ENCODE measurements at regions of chr2 and their contacts with region 1.

Region 1: GRCh38 chr2:205680067-205680466 is 2.2 kb upstream of the NRP2 start:
- DNase-seq: peak in 4 of 5 donors; percentile 32 to 39 (median 38)
- H3K4me3 ChIP-seq: no peak overlapping the region
- H3K4me3 Mint-ChIP-seq: peak overlapping the region in 4 of 8 donors; percentile 45 to 63 (median 50)
- H3K27ac ChIP-seq: no peak overlapping the region
- H3K27ac Mint-ChIP-seq: no peak overlapping the region
- H3K4me1 ChIP-seq: peaks cover 18% of the 10 kb centered on the region
- H3K4me1 Mint-ChIP-seq: peaks cover 5 to 29% (median 20%) of the 10 kb centered on the region in 4 donors
- H3K27me3 ChIP-seq: peaks cover 22% of the 10 kb centered on the region
- H3K27me3 Mint-ChIP-seq: peaks cover 35 to 36% of the 10 kb centered on the region in 2 donors

Region 2: DNA sequence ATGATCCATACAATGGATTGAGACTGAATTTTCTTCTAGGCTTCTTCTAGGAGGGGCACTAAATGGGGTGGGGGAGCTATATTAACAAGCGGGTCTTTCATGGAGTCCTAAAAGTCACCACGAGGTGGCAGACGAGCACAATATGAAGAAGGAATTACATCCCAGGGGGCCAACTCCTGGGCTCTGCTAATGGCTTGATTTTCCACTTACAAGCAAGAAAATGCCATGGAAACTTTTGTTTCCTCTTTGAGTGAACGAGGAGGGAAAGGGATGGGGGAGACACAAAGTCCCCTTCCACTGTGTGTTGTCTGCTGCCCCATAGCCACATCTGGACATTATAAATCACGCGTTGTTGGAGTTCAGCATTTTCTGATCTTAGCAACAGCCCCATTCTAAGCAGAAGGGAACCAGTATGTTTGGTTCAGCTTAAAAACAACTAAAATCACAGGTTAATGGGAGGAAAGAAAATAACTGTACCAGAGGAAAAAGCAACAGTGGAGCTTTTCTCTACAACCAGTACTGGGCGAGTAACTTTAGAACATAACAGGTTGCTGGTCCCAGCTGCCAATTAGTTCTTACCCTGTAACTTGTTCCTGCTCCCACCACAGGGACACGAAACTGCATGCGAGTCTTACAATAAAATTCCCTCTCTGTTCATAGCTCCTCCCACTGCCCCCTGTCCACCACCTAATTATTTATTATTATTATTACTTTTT is 1419.7 kb before region 1 on chr2:
- CTCF ChIA-PET with region 1: interaction called, 9 read pairs
- POLR2A ChIA-PET with region 1: no interaction called
- intact Hi-C with region 1: loop called (anchors 1 kb)
- DNase-seq: peak; percentile 17 to 40 (median 23)
- H3K4me3 ChIP-seq: no peak overlapping the region
- H3K4me3 Mint-ChIP-seq: no peak overlapping the region
- H3K27ac ChIP-seq: no peak overlapping the region
- H3K27ac Mint-ChIP-seq: no peak overlapping the region
- H3K4me1 ChIP-seq: no peaks in the 10 kb centered on the region
- H3K4me1 Mint-ChIP-seq: peaks cover 0 to 2% (median 0%) of the 10 kb centered on the region in 4 donors
- H3K27me3 ChIP-seq: no peaks in the 10 kb centered on the region
- H3K27me3 Mint-ChIP-seq: peaks cover 19 to 26% of the 10 kb centered on the region in 2 donors

Region 3: GRCh38 chr2:204545023-204545860 is 1134.8 kb before region 1 on chr2 and contains the start of gene PARD3B:
- CTCF ChIA-PET with region 1: no interaction called
- POLR2A ChIA-PET with region 1: no interaction called
- intact Hi-C with region 1: loop called (anchors 10 kb)
- DNase-seq: peak in 4 of 5 donors; percentile 12 to 27 (median 21)
- H3K4me3 ChIP-seq: peak within 1 kb of the TSS in 1 of 2 donors; percentile 38
- H3K4me3 Mint-ChIP-seq: peak within 1 kb of the TSS; percentile 85 to 94 (median 89)
- H3K27ac ChIP-seq: no peak within 1 kb of the TSS
- H3K27ac Mint-ChIP-seq: peak within 1 kb of the TSS in 2 of 7 donors; percentile 57 to 72
- H3K4me1 ChIP-seq: peaks cover 9% of the 10 kb centered on the region
- H3K4me1 Mint-ChIP-seq: peaks cover 10 to 16% (median 14%) of the 10 kb centered on the region in 4 donors
- H3K27me3 ChIP-seq: peaks cover 7% of the 10 kb centered on the region
- H3K27me3 Mint-ChIP-seq: peaks cover 25 to 28% of the 10 kb centered on the region in 2 donors
- total RNA-seq, gene PARD3B: 1.2 to 1.3 TPM

Region 4: DNA sequence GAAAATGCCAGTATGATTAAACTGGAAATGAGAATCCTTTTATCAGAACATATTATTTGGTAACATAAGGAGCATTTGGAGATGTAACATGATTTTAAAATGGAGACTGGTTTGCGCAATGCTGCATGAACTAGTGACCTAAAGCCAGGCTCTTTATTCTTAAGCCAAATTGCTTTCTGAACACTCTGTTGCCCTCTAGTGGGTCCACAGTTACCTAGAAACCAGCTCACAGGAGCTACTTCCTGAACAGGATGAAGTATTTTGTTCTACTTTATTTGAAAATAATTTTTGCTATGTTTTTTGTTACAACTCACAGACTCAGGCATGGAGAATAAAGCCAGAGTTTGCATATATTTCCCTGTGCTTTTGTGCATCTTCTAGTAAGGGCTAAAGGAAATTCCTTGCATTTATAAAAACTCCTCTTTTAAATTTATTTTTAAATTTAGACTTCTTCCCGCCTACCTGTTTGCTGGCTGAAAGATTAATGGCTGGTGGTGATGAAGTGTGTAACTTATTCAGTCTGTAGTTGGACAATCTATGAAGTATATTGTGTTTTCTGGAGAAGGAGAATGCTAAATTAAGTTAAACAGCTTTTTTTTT is 988.1 kb before region 1 on chr2:
- CTCF ChIA-PET with region 1: interaction called, 15 read pairs
- POLR2A ChIA-PET with region 1: no interaction called
- intact Hi-C with region 1: loop called (anchors 5 kb)
- DNase-seq: peak in 3 of 5 donors; percentile 13 to 24 (median 20)
- H3K4me3 ChIP-seq: no peak overlapping the region
- H3K4me3 Mint-ChIP-seq: no peak overlapping the region
- H3K27ac ChIP-seq: no peak overlapping the region
- H3K27ac Mint-ChIP-seq: no peak overlapping the region
- H3K4me1 ChIP-seq: no peaks in the 10 kb centered on the region
- H3K4me1 Mint-ChIP-seq: peaks cover 0 to 11% (median 8%) of the 10 kb centered on the region in 4 donors
- H3K27me3 ChIP-seq: no peaks in the 10 kb centered on the region
- H3K27me3 Mint-ChIP-seq: peaks cover 0 to 1% of the 10 kb centered on the region in 2 donors

Region 5: DNA sequence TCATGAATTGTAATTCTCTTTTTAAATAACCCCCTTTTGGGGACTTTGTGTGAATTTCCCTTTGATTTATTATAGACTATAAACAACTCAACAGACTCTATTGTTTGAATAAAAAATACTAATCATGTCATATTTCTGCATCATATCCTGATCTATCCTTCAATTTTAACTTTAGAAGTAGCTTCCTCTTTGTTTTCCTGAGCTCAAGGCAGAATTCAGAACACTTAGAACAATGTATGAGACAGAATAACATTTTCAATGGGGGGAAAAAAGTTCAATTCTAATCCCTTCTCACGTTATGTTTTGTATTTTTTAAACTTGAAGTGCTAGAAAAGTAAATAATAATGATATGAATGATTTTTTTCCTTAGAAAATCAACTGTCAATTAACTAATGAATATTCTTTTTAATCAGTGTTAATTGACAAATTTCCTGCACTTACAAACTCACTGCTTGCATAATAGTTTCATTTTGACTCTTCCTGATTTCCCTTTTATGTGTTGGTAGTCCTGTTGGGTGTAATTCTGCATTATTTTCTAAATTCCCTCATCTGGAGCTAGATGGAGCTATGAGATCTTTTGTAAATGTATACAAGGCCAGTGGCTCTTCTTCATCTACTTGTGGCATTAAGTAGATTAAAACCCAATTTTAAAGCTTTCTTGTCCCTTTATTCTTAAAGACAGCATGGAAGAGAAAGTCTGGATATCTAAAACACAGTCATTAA is 808.7 kb before region 1 on chr2:
- CTCF ChIA-PET with region 1: interaction called, 151 read pairs
- POLR2A ChIA-PET with region 1: no interaction called
- intact Hi-C with region 1: loop called (anchors 1 kb)
- DNase-seq: peak in 4 of 5 donors; percentile 37 to 53 (median 44)
- H3K4me3 ChIP-seq: no peak overlapping the region
- H3K4me3 Mint-ChIP-seq: peak overlapping the region in 5 of 8 donors; percentile 0 to 70 (median 1)
- H3K27ac ChIP-seq: no peak overlapping the region
- H3K27ac Mint-ChIP-seq: peak overlapping the region in 2 of 7 donors; percentile 5 to 29
- H3K4me1 ChIP-seq: peaks cover 15% of the 10 kb centered on the region
- H3K4me1 Mint-ChIP-seq: peaks cover 11 to 30% (median 22%) of the 10 kb centered on the region in 4 donors
- H3K27me3 ChIP-seq: no peaks in the 10 kb centered on the region
- H3K27me3 Mint-ChIP-seq: no peaks in the 10 kb centered on the region

Region 6: DNA sequence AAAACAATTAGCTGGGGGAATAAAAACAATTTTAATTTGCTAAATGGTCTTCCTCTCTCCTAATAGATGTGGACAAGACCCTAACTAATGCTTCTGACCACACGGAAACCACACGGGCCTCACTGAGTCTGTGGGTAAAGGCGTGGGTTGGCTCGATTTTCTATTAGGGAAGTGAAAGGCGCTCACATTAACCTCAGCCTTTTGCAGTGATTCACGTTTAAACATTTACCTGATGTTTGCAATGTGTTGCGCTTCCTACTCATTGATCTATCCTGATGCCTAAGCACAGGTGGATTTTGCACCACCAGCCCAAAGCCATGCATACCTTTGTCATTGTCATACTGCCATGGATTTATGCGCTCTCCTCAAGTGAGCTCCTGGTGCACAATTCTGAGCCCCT is 33.4 kb before region 1 on chr2:
- CTCF ChIA-PET with region 1: no interaction called
- POLR2A ChIA-PET with region 1: no interaction called
- intact Hi-C with region 1: no loop called
- DNase-seq: no peak
- H3K4me3 ChIP-seq: no peak overlapping the region
- H3K4me3 Mint-ChIP-seq: no peak overlapping the region
- H3K27ac ChIP-seq: no peak overlapping the region
- H3K27ac Mint-ChIP-seq: no peak overlapping the region
- H3K4me1 ChIP-seq: no peaks in the 10 kb centered on the region
- H3K4me1 Mint-ChIP-seq: no peaks in the 10 kb centered on the region
- H3K27me3 ChIP-seq: no peaks in the 10 kb centered on the region
- H3K27me3 Mint-ChIP-seq: peaks cover 6 to 11% of the 10 kb centered on the region in 2 donors

Region 7: DNA sequence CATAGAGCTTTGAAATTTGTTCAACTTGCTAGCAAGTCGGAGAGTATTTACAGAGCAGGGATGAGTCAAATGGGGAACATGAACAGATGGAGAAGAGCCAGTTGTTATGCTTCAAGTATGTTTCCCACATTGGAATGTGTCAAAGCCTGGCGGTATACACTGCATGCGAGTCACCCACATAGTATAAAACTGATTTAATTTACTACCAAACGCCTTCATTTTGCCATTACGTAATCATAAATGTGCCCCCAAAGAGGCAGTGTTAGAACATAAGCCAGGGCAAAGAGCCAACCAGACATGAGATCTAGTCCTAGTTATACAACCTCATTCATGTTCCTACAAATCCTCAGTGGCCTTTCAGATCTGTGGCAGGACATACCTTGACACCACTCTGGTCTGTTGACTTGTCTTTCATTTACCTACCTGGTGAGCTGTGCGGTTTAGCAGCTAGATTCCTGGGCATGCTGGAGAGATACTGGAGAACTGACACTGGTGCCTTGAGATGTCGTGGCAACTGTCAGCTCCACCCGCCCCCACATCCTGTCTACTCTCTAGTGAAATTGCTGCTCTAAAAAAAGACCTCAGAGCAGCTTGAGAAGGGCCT is 19.4 kb before region 1 on chr2:
- CTCF ChIA-PET with region 1: interaction called, 15 read pairs
- POLR2A ChIA-PET with region 1: no interaction called
- intact Hi-C with region 1: no loop called
- DNase-seq: peak in 3 of 5 donors; percentile 15 to 25 (median 23)
- H3K4me3 ChIP-seq: no peak overlapping the region
- H3K4me3 Mint-ChIP-seq: peak overlapping the region in 3 of 8 donors; percentile 12 to 15 (median 15)
- H3K27ac ChIP-seq: no peak overlapping the region
- H3K27ac Mint-ChIP-seq: peak overlapping the region in 2 of 7 donors; percentile 67 to 77
- H3K4me1 ChIP-seq: peaks cover 9% of the 10 kb centered on the region
- H3K4me1 Mint-ChIP-seq: peaks cover 6 to 21% (median 15%) of the 10 kb centered on the region in 4 donors
- H3K27me3 ChIP-seq: no peaks in the 10 kb centered on the region
- H3K27me3 Mint-ChIP-seq: peaks cover 2 to 4% of the 10 kb centered on the region in 2 donors

Measured in CD4-positive, alpha-beta memory T cell (primary cell).